ENCODE measurements at regions of chr7 and their contacts with region 1.

Region 1: DNA sequence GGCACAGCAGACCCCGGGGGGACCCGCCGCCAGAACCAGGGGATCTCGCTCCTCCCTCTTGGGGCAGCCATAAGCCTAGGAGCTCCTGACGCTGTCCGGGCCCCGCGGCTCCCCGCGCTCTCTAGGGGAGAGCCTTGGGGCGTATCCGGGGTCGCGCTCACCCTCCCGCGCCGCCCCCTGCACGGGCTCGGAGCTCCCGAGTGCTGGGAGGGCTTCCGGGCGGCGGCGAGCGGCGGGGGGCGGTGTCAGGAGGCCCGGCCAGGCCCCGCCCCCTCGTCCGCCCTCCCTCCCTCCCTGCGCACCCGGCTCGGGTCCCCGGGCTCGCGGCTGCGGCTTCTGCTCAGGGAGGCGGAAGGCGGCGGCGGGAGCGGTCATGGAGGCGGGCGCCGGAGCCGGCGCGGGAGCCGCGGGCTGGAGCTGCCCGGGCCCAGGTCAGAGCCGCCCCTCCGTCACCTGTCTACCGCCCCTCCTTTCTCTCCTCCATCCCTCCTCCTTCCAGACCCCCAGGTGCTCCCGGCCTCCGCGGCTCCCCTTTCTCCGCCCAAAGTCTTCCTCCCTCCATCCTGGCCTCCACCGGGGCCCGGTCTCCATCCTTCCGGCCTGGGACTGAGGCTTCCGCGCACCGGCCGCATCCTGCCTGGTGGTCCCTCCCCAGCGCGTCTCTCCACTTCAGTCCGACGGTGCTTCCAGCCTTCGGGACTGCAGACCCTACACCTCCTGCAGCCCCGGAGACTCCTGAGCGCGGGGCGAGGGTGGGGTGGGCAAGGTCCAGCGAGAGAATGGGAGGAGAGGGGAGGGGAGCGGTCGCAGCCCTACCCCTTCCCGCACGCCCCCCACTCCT is 427 bp upstream of the CCDC136 start:
- DNase-seq: peak in 1 of 2 experiments; percentile 71
- H3K4me3 ChIP-seq: peak overlapping the region; percentile 65
- H3K27ac ChIP-seq: no peak overlapping the region
- H3K4me1 ChIP-seq: peaks cover 4% of the 10 kb centered on the region; the same call in 1 of the 2 replicates
- H3K27me3 ChIP-seq: no peaks in the 10 kb centered on the region
- CTCF ChIP-seq: no peak

Region 2: DNA sequence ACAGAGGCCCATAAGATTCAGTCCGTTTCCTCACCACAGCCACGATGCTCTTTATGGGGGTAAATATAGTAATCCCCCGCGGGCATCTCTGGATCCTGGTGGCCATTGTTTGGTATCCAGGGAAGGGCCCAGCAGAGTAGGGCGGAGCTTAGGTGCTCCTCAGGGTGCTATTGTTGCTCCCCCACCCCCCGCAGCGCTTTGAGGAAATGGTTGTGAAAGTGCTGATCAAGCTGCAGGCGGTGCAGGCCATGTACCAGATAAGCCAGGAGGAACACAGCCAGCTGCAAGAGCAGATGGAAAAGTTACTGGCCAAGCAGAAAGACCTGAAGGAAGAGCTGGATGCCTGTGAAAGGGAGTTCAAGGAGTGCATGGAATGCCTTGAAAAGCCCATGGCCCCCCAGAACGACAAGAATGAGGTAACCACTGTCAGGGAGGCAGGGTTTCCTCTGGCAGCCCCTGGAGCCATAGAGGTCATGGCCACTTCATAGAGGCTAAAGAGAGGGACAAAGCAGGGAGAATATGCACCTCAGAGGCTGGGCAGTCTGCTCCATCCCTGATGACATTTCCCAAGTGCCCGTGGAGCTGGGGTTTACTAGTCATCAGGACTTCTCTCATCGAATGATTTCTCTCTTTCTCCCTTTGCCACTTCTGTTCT is 21.3 kb after region 1 on chr7:
- CTCF ChIA-PET with region 1: no interaction called
- POLR2A ChIA-PET with region 1: interaction called, 24 read pairs
- intact Hi-C with region 1: no loop called
- DNase-seq: peak; percentile 55 to 62
- H3K4me3 ChIP-seq: no peak overlapping the region
- H3K27ac ChIP-seq: no peak overlapping the region
- H3K4me1 ChIP-seq: peaks cover 12% of the 10 kb centered on the region
- H3K27me3 ChIP-seq: peaks cover 14% of the 10 kb centered on the region
- CTCF ChIP-seq: no peak

Region 3: DNA sequence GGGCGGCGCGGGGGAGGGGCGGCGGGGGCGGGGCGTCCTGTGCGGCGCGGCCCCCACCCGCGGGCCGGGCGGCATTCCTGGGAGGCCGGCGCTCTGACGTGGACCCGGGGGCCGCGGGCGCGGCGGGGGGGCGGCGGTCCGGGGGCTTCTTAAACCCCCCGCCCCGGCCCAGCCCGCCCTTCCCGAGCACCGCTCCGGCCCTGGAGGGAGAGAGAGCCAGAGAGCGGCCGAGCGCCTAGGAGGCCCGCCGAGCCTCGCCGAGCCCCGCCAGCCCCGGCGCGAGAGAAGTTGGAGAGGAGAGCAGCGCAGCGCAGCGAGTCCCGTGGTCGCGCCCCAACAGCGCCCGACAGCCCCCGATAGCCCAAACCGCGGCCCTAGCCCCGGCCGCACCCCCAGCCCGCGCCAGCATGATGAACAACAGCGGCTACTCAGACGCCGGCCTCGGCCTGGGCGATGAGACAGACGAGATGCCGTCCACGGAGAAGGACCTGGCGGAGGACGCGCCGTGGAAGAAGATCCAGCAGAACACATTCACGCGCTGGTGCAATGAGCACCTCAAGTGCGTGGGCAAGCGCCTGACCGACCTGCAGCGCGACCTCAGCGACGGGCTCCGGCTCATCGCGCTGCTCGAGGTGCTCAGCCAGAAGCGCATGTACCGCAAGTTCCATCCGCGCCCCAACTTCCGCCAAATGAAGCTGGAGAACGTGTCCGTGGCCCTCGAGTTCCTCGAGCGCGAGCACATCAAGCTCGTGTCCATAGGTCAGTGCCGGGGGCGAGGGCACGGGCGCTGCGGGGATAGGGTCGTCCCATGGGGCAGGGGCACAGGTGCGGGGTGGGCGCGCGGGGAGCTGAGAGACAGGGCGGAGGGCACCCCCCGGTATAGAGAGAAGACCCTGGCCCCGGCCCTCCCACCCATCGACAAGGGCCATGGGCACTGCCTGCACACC is 39.2 kb after region 1 on chr7 and contains the start of gene FLNC:
- CTCF ChIA-PET with region 1: no interaction called
- POLR2A ChIA-PET with region 1: no interaction called
- intact Hi-C with region 1: loop called (anchors 5 kb)
- DNase-seq: peak in 1 of 2 experiments; percentile 60
- H3K4me3 ChIP-seq: peak within 1 kb of the TSS; percentile 54; the same call in 1 of the 2 replicates
- H3K27ac ChIP-seq: no peak within 1 kb of the TSS
- H3K4me1 ChIP-seq: peaks cover 52% of the 10 kb centered on the region
- H3K27me3 ChIP-seq: no peaks in the 10 kb centered on the region
- CTCF ChIP-seq: no peak
- total RNA-seq, gene FLNC: 75.5 and 96.6 TPM in 2 replicates

Region 4: GRCh38 chr7:128862571-128863432 is 71.5 kb after region 1 on chr7 and contains the start of gene ATP6V1F:
- CTCF ChIA-PET with region 1: no interaction called
- POLR2A ChIA-PET with region 1: no interaction called
- intact Hi-C with region 1: loop called (anchors 5 kb)
- DNase-seq: peak; percentile 88 to 99
- H3K4me3 ChIP-seq: peak within 1 kb of the TSS; percentile 71
- H3K27ac ChIP-seq: no peak within 1 kb of the TSS
- H3K4me1 ChIP-seq: peaks cover 10% of the 10 kb centered on the region
- H3K27me3 ChIP-seq: no peaks in the 10 kb centered on the region
- CTCF ChIP-seq: no peak
- total RNA-seq, gene ATP6V1F: 114 and 169 TPM in 2 replicates

Region 5: DNA sequence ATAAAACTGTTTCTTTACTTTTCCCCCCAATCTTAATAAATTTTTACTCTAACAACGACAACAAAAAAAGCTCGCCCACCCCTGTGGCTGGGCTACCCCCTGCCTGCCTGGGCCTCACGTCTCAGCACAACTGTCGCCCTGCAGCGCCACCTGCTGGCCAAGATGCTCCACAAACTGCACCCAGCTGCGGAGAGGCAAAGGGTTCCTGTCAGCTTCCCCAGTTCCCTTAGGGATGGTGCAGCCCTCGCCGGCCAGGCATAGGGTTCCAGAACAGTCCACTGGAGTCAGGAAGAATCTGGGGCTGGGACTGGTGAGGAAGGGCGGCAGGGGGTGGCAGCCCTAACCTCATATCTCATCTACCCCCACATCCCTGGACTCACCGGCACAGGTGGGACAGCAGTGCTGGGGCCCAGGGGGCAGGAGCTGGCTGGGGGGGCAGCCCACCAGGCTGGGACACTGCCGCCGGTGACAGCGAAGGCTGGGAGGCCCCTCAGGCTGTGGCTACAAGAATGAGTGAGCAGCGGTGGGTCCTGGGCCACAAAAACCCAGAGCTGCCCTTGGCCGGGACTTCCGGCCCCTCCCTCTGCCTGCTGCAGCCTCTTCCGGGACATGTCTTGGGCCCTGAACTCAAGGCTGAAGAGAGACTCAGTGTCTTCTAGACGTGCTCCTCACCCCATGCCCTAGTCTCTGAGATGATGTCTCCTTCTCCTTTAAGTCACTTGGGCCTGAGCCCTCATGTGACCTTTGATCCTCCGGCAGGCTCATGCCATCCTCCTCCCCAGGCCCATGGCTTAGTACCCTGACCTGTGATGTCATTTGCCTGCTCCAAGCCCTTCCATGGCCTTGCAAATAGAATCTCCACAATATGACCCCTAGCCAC is 92.5 kb after region 1 on chr7:
- CTCF ChIA-PET with region 1: interaction called, 3 read pairs
- POLR2A ChIA-PET with region 1: no interaction called
- intact Hi-C with region 1: loop called (anchors 1 kb)
- DNase-seq: peak in 1 of 2 experiments; percentile 84
- H3K4me3 ChIP-seq: no peak overlapping the region
- H3K27ac ChIP-seq: no peak overlapping the region
- H3K4me1 ChIP-seq: peaks cover 17% of the 10 kb centered on the region
- H3K27me3 ChIP-seq: no peaks in the 10 kb centered on the region
- CTCF ChIP-seq: peak; percentile 96

Region 6: GRCh38 chr7:129433847-129434674 is 642.7 kb after region 1 on chr7 and contains the start of gene STRIP2:
- CTCF ChIA-PET with region 1: no interaction called
- POLR2A ChIA-PET with region 1: interaction called, 12 read pairs
- intact Hi-C with region 1: no loop called
- DNase-seq: peak; percentile 72 to 94
- H3K4me3 ChIP-seq: peak within 1 kb of the TSS; percentile 95
- H3K27ac ChIP-seq: peak within 1 kb of the TSS; percentile 45
- H3K4me1 ChIP-seq: peaks cover 44% of the 10 kb centered on the region
- H3K27me3 ChIP-seq: no peaks in the 10 kb centered on the region
- CTCF ChIP-seq: no peak
- total RNA-seq, gene STRIP2: 6.4 and 9.5 TPM in 2 replicates